Activated CD4-positive, alpha-beta T cell treated with anti-CD3 and anti-CD28 coated beads, Interleukin-2, amount 10 ng/mL, durations not matched to agents 24 days and 14 days (primary cell): ENCODE measurements at regions of chr11 and their contacts with region 1.

Region 1: GRCh38 chr11:119236490-119236889 is 30.4 kb downstream of the CBL start:
- DNase-seq: no peak
- H3K4me3 Mint-ChIP-seq: no peak overlapping the region
- H3K27ac Mint-ChIP-seq: peak overlapping the region; percentile 94
- H3K4me1 Mint-ChIP-seq: peaks cover 39% of the 10 kb centered on the region
- H3K27me3 Mint-ChIP-seq: no peaks in the 10 kb centered on the region

Region 2: DNA sequence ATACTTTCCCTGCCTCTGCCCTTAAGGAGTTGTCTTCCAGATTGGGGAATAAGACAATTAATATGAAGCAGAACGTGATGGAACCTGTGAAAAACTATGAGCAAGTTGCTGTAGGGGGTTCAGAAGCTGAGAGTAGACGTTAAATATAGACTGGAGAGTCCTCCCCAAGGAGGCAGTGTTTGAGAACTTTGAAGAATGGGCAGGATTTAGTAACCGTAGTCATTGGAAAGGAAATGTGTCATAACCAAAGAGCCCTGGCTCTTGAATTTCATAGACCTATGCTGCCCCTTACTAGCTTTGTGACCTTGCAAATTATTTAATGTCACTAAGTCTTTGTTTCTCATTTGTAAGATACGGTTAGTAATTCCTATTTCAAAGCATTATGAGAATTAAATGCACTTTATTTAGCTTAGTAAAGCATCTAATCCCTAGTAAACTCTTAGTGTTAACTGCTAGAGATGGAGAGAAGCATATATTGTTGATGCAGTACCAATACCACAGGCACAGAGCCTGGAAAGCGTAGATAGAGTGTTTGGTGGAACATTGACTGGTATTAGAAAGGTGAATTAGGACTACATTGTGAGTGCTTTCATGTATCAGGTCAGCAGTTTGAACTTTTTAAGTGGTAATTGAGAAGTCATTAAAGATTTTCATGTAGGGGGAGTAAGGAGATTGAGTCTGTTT is 26.3 kb after region 1 on chr11:
- intact Hi-C with region 1: loop called (anchors 1 kb)
- DNase-seq: peak; percentile 75
- H3K4me3 Mint-ChIP-seq: no peak overlapping the region
- H3K27ac Mint-ChIP-seq: no peak overlapping the region
- H3K4me1 Mint-ChIP-seq: peaks cover 47% of the 10 kb centered on the region
- H3K27me3 Mint-ChIP-seq: no peaks in the 10 kb centered on the region